Dorsolateral prefrontal cortex (tissue), 120 donors: ENCODE measurements at regions of chr1 and their contacts with region 1.

Region 1: DNA sequence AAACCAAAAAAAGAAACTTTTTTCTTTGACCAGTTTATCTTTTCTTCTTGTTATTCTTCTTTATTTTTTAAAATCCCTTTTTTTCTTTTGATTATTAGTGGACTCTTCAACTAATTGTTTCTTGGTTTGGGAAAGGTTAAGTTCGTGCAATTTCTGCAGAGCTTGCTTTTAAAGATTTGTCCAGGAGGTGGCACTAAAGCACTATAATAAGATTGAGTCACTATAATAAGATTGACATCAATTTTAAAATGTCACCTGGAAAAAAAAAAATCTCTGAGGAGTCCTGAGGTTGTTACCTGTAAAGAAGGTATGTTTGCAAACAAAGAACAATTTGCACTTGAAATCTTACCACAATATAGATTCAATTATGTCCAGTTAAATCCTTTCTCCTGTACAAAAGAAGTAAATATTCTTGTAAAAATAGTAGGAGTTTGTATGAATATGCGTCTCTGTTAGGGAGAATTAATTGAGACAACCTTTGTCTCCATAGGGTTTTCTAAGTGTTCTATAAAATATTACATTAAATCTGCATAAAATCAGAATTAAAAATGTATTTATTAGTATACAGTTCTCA is 166.7 kb downstream of the ADGRL4 start:
- DNase-seq: peak in 2 of 10 donors; percentile 3 to 22
- H3K4me3 ChIP-seq: peak overlapping the region in 1 of 59 donors; percentile 14
- H3K27ac ChIP-seq: no peak overlapping the region
- H3K27me3 ChIP-seq: peaks cover 0 to 4% (median 0%) of the 10 kb centered on the region in 45 donors
- CTCF ChIP-seq: peak; percentile 54 to 83 (median 71)

Region 2: DNA sequence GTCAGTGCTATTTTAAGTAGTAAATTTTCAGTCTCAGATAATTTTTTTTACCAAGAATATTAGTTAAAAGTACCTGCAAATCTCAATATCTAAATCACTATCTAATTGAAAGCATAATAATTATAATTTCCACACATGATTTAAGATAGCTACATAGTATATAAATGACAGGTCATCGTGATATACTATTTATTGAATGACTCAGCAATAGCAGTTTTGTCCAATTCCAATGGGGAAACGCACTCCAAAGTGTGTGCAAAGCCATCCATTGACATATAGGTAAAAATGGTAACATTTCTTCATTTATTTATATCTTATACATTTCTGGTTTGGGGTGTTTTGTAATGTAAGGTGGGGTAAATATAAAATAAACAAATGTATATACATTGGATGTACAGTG is 147.3 kb after region 1 on chr1:
- intact Hi-C with region 1: no loop called
- DNase-seq: no peak
- H3K4me3 ChIP-seq: no peak overlapping the region
- H3K27ac ChIP-seq: no peak overlapping the region
- H3K27me3 ChIP-seq: no peaks in the 10 kb centered on the region
- CTCF ChIP-seq: no peak

Region 3: DNA sequence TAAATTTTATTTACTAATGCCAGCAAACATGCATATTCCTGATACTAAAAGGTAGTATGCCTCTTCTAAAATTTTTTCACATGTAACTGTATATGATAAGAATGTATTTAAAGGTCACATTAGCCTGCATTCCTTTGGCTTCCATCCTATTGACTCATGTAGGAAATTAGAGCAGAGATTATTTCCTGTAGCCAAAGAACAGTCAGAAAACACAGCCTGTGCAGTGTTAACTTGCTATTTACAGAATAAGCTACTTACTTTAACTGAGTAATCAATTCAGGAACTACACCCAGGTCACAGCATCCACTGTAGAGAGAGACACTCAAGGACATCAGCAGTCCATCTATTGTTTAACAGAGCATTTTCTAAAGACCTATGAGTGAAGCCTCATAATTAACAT is 321.3 kb after region 1 on chr1:
- intact Hi-C with region 1: no loop called
- DNase-seq: no peak
- H3K4me3 ChIP-seq: no peak overlapping the region
- H3K27ac ChIP-seq: no peak overlapping the region
- H3K27me3 ChIP-seq: peaks cover 0 to 7% (median 0%) of the 10 kb centered on the region in 45 donors
- CTCF ChIP-seq: no peak

Region 4: GRCh38 chr1:79353224-79353623 is 513.4 kb after region 1 on chr1:
- intact Hi-C with region 1: loop called in 1 of 2 experiments (anchors 5 kb)
- DNase-seq: no peak
- H3K4me3 ChIP-seq: no peak overlapping the region
- H3K27ac ChIP-seq: no peak overlapping the region
- H3K27me3 ChIP-seq: peaks cover 0 to 9% (median 0%) of the 10 kb centered on the region in 45 donors
- CTCF ChIP-seq: peak in 48 of 56 donors; percentile 17 to 68 (median 41)